ENCODE measurements at regions of chr10 and their contacts with region 1.

Region 1: DNA sequence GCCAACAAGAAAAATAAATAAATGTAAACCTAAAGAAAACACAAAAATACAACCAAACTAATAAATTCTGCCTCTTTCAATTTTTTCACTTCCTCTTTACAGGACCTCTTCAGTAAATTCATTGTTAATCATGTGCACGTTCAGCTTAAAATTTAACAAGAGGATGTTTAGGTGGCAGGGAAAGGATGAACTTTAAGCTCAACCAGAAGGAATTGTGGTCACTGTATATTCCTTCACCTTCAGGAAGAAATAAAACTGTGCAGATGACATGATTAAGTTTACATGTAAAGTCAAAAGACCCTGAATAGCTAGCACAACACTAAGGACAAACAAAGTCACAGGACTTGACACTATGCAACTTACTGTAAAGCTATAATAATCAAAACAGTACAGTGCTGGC is 33.0 kb downstream of the KIF5B start:
- DNase-seq: no peak
- ATAC-seq: no peak

Region 2: GRCh38 chr10:31803606-31804351 is 219.5 kb before region 1 on chr10:
- intact Hi-C with region 1: no loop called
- DNase-seq: no peak
- ATAC-seq: no peak

Region 3: GRCh38 chr10:31982111-31982510 is 41.2 kb before region 1 on chr10:
- intact Hi-C with region 1: no loop called
- DNase-seq: no peak
- ATAC-seq: no peak

Region 4: GRCh38 chr10:32279795-32280194 is 256.5 kb after region 1 on chr10:
- intact Hi-C with region 1: loop called in 1 of 2 experiments (anchors 10 kb)
- DNase-seq: no peak
- ATAC-seq: no peak